PC-3 (cell line): ENCODE measurements at regions of chr20 and their contacts with region 1.

Region 1: DNA sequence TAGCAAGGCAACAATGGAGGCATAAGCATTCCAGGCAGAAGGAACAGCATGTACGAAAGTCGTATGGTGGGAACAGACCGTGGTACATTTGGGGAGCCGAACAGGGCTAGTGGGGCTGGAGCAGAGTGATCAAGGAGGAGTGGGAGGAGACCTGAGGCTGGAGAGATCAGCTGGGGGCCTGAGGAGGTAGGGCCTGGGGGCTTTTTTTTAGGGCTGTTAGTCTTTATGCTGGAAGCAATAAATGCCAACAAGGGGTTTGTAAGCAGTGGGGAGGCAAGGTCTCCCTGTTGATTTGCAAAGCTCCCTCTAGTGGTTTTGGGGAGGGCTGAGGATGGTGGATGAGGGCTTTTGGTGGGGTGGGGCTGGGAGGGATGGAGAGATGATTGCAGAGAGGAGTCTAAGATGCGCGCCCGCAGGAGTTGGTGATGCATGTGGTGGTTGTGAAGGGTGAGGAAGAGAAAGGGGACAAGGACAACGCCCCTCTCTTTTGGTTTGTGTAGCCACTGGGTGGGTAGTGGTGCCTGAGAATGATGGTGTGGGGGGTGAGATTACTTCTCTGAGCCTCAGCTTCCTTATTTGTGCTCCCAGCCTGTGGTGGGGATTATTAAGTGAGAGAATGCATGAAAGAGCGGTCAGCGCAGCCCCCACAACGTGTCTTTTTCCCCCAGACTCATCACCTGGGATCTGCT is 74.1 kb upstream of the TOX2 start:
- DNase-seq: peak; percentile 68
- ATAC-seq: no peak; the same call in 1 of the 2 replicates
- H3K4me3 ChIP-seq: no peak overlapping the region
- H3K27ac ChIP-seq: no peak overlapping the region
- H3K4me1 ChIP-seq: peaks cover 44% of the 10 kb centered on the region
- H3K27me3 ChIP-seq: no peaks in the 10 kb centered on the region
- CTCF ChIP-seq: peak; percentile 65

Region 2: DNA sequence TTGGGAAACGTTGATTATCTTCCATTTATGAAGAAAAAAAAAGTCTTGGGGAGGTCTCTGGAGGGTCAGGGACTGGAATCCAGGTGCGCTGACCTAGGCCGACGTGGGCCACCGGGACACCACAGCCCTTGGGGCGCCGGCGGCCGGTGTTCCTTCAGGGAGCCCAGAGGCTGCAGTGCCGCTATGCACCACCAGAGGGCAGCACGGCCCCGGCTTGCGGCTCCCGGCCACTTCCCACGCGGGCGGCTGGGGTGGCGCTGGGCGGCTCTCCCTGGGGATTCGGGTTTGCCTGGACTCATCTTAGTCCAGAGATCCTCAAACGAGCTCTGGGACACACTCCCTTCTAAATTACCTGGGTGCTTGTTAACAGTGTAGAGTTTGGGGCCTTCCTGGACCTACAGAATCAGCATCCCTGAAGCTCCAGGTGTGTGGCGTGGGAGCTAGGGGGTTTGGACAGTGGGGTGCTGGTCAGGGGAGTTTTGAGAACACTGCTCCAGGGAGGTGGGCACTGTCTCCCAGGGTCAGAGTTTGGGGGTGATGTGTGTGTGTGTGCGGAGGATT is 90.7 kb before region 1 on chr20:
- CTCF ChIA-PET with region 1: interaction called, 6 read pairs
- POLR2A ChIA-PET with region 1: no interaction called
- intact Hi-C with region 1: loop called (anchors 1 kb)
- DNase-seq: peak; percentile 88
- ATAC-seq: peak; percentile 71
- H3K4me3 ChIP-seq: no peak overlapping the region
- H3K27ac ChIP-seq: no peak overlapping the region
- H3K4me1 ChIP-seq: peaks cover 32% of the 10 kb centered on the region
- H3K27me3 ChIP-seq: no peaks in the 10 kb centered on the region
- CTCF ChIP-seq: peak; percentile 99

Region 3: GRCh38 chr20:43942661-43943290 is 102.2 kb after region 1 on chr20:
- CTCF ChIA-PET with region 1: interaction called, 6 read pairs
- POLR2A ChIA-PET with region 1: interaction called, 3 read pairs
- intact Hi-C with region 1: loop called (anchors 1 kb)
- DNase-seq: peak; percentile 72
- ATAC-seq: no peak; the same call in none of the 2 replicates
- H3K4me3 ChIP-seq: peak overlapping the region; percentile 40
- H3K27ac ChIP-seq: peak overlapping the region; percentile 60
- H3K4me1 ChIP-seq: peaks cover 57% of the 10 kb centered on the region
- H3K27me3 ChIP-seq: no peaks in the 10 kb centered on the region
- CTCF ChIP-seq: no peak

Region 4: GRCh38 chr20:43955062-43955749 is 114.7 kb after region 1 on chr20:
- CTCF ChIA-PET with region 1: interaction called, 3 read pairs
- POLR2A ChIA-PET with region 1: no interaction called
- intact Hi-C with region 1: loop called (anchors 1 kb)
- DNase-seq: peak; percentile 96
- ATAC-seq: peak; percentile 92
- H3K4me3 ChIP-seq: no peak overlapping the region; the same call in 1 of the 2 replicates
- H3K27ac ChIP-seq: peak overlapping the region; percentile 72
- H3K4me1 ChIP-seq: peaks cover 33% of the 10 kb centered on the region
- H3K27me3 ChIP-seq: no peaks in the 10 kb centered on the region
- CTCF ChIP-seq: no peak

Region 5: GRCh38 chr20:44056010-44056698 is 215.6 kb after region 1 on chr20:
- CTCF ChIA-PET with region 1: no interaction called
- POLR2A ChIA-PET with region 1: no interaction called
- intact Hi-C with region 1: loop called (anchors 1 kb)
- DNase-seq: peak; percentile 78
- ATAC-seq: peak; percentile 99
- H3K4me3 ChIP-seq: no peak overlapping the region
- H3K27ac ChIP-seq: no peak overlapping the region
- H3K4me1 ChIP-seq: no peaks in the 10 kb centered on the region
- H3K27me3 ChIP-seq: no peaks in the 10 kb centered on the region
- CTCF ChIP-seq: peak; percentile 87

Region 6: GRCh38 chr20:44080646-44081267 is 240.2 kb after region 1 on chr20:
- CTCF ChIA-PET with region 1: interaction called, 20 read pairs
- POLR2A ChIA-PET with region 1: no interaction called
- intact Hi-C with region 1: loop called (anchors 1 kb)
- DNase-seq: peak; percentile 94
- ATAC-seq: peak; percentile 66
- H3K4me3 ChIP-seq: no peak overlapping the region
- H3K27ac ChIP-seq: no peak overlapping the region
- H3K4me1 ChIP-seq: peaks cover 28% of the 10 kb centered on the region
- H3K27me3 ChIP-seq: no peaks in the 10 kb centered on the region
- CTCF ChIP-seq: peak; percentile 99

Region 7: GRCh38 chr20:44210422-44211176 is 370.1 kb after region 1 on chr20 and contains the start of gene OSER1:
- CTCF ChIA-PET with region 1: no interaction called
- POLR2A ChIA-PET with region 1: no interaction called
- intact Hi-C with region 1: loop called (anchors 10 kb)
- DNase-seq: peak; percentile 99
- ATAC-seq: peak; percentile 80
- H3K4me3 ChIP-seq: peak within 1 kb of the TSS; percentile 87
- H3K27ac ChIP-seq: peak within 1 kb of the TSS; percentile 77
- H3K4me1 ChIP-seq: peaks cover 48% of the 10 kb centered on the region
- H3K27me3 ChIP-seq: no peaks in the 10 kb centered on the region
- CTCF ChIP-seq: no peak
- total RNA-seq, gene OSER1: 29.0 and 34.8 TPM in 2 replicates